Testis (tissue), 5 donors: ENCODE measurements at regions of chr14 and their contacts with region 1.

Region 1: GRCh38 chr14:93655078-93655750 is 133.1 kb downstream of the PRIMA1 start:
- DNase-seq: peak; percentile 47
- H3K4me3 ChIP-seq: no peak overlapping the region
- H3K27ac ChIP-seq: no peak overlapping the region
- H3K4me1 ChIP-seq: no peaks in the 10 kb centered on the region
- H3K27me3 ChIP-seq: no peaks in the 10 kb centered on the region
- CTCF ChIP-seq: peak in 2 of 3 experiments; percentile 66
- POLR2A ChIP-seq: no peak

Region 2: GRCh38 chr14:93752635-93753561 is 97.7 kb after region 1 on chr14:
- intact Hi-C with region 1: no loop called
- DNase-seq: no peak
- H3K4me3 ChIP-seq: no peak overlapping the region
- H3K27ac ChIP-seq: no peak overlapping the region
- H3K4me1 ChIP-seq: no peaks in the 10 kb centered on the region
- H3K27me3 ChIP-seq: no peaks in the 10 kb centered on the region
- CTCF ChIP-seq: no peak
- POLR2A ChIP-seq: no peak

Region 3: DNA sequence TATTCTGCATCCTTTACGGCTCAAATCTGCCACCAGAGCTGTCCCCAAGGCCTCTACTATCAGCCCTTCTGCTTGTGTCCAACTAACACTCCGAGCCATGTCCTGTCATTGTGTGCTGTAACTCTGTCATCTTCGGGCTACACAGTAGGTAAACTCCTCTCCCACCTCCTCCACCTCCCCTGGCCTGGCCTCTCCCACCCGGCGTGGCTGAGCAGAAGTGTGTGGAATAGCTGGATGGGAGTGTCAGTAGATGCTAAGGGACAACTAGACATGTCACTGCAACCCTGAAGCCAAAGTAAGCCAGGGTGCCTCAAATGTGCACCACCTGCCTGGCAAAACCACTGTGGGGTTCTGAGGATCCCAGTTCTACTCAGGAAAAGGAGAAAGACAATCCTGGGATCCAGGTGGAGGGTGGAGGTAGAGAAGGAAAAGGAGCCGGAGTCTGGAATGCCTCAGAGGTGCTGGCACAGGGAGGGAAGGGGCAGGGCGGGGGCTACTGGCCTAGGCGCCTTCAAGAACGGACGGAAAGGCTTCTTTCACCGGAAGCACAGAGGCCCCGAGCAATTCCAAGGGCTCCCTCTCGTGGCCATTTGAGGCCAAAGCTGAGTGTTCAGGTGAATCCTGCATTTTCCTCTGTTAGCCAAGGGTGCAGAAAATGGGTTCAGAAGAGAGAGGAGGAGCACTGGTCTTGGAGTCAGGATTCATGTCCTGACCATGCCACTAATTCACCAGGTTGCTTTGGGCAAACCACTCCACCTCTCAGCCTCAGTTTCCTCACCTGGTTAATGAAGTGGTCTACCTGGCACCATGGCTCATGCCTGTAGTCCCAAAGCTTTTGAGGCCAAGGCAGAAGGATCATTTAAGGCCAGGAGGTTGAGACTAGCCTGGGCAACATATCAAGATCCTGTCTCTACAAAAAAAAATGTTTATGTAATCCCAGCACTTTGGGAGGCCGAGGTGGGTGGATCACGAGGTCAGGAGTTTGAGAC is 251.4 kb after region 1 on chr14:
- intact Hi-C with region 1: loop called (anchors 10 kb)
- DNase-seq: peak; percentile 70
- H3K4me3 ChIP-seq: no peak overlapping the region
- H3K27ac ChIP-seq: no peak overlapping the region
- H3K4me1 ChIP-seq: peaks cover 5% of the 10 kb centered on the region
- H3K27me3 ChIP-seq: no peaks in the 10 kb centered on the region
- CTCF ChIP-seq: peak; percentile 23 to 66 (median 51)
- POLR2A ChIP-seq: no peak

Region 4: DNA sequence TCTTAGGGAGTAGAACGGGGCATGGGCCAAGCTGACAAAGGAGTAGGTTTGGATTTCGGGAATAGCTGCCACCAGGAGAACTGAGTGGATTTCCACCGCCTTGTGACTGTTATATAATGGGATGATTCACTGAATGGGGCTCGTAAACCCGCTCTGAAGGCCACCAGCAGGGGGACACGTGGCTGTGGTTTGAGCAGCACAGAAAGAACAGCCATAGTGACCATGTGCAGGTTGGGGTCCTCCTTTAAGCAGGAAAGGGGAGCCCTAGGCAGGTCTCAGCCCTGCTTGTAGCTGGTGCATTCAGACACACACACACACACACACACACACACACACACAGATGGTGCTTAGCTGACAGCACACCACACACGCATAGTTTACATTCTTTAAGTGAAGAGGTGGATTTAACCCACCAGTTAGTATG is 329.8 kb after region 1 on chr14:
- intact Hi-C with region 1: no loop called
- DNase-seq: peak; percentile 54
- H3K4me3 ChIP-seq: no peak overlapping the region
- H3K27ac ChIP-seq: no peak overlapping the region
- H3K4me1 ChIP-seq: peaks cover 7% of the 10 kb centered on the region
- H3K27me3 ChIP-seq: no peaks in the 10 kb centered on the region
- CTCF ChIP-seq: peak in 1 of 3 experiments; percentile 8
- POLR2A ChIP-seq: no peak